Heart right ventricle (tissue), 16 donors: ENCODE measurements at regions of chr11 and their contacts with region 1.

Region 1: DNA sequence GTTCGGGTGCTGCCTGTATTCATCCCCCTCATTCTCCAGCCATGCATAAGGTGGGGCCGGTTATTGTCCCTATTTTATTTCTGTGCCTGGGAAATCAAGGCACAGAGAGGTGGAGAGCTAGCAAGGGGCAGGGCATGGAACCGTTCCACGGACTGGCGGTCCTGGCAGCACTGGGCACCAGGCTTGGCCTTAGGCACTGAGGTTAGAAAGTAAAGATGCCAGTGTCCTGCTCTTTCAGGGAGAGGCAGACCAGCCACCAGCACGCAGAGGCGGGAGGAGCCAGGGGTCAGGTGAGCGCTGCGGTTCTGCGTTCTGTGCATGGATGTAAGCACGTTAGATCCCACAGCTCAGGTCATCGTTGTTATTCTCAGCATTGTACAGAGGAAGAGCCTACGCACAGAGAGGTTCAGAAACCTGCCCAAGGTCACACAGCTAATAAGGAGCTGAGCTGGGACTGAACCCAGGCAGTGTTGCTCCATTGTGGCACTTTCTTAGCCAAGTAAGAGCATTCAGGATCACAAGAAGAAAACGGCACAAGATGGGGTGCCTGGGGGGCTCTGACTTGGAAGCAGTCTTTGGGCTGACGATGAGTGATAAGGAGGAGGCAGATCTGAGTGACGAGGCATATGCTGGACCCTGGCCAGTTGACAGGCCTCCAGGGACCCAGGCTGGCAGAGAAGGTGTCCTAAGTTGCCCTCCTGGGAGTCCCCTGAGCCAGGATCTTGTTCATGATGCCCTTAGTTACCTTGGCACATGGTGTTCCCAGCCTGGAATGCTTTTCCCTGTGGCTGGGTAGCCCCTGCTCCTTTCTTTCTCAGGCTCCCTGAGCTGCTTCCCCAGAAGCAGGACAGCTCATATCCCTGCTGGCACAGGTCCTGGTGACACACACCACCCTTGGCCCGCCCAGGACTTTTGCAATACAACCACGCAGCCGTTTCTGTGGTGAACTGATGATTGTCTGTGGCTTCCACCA is 41.1 kb downstream of the OSBPL5 start:
- DNase-seq: peak; percentile 63 to 74
- ATAC-seq: peak; percentile 32 to 81 (median 51)
- H3K4me3 ChIP-seq: no peak overlapping the region
- H3K27ac ChIP-seq: peak overlapping the region in 9 of 10 donors; percentile 4 to 69 (median 46)
- H3K4me1 ChIP-seq: peaks cover 14 to 53% (median 48%) of the 10 kb centered on the region in 9 donors
- H3K27me3 ChIP-seq: no peaks in the 10 kb centered on the region
- CTCF ChIP-seq: no peak

Region 2: GRCh38 chr11:3109921-3110706 is 13.9 kb before region 1 on chr11:
- intact Hi-C with region 1: no loop called
- DNase-seq: peak in 1 of 2 donors; percentile 45
- ATAC-seq: peak; percentile 8 to 75 (median 73)
- H3K4me3 ChIP-seq: no peak overlapping the region
- H3K27ac ChIP-seq: no peak overlapping the region
- H3K4me1 ChIP-seq: peaks cover 0 to 19% (median 0%) of the 10 kb centered on the region in 9 donors
- H3K27me3 ChIP-seq: no peaks in the 10 kb centered on the region
- CTCF ChIP-seq: peak; percentile 47 to 76 (median 68)

Region 3: GRCh38 chr11:3195251-3196160 is 71.5 kb after region 1 on chr11:
- intact Hi-C with region 1: loop called in 1 of 10 experiments (anchors 10 kb)
- DNase-seq: no peak
- ATAC-seq: peak in 5 of 8 donors; percentile 14 to 69 (median 31)
- H3K4me3 ChIP-seq: no peak overlapping the region
- H3K27ac ChIP-seq: no peak overlapping the region
- H3K4me1 ChIP-seq: peaks cover 0 to 6% (median 0%) of the 10 kb centered on the region in 9 donors
- H3K27me3 ChIP-seq: peaks cover 0 to 33% (median 11%) of the 10 kb centered on the region in 7 donors
- CTCF ChIP-seq: peak in 8 of 9 donors; percentile 12 to 56 (median 45)